ENCODE measurements at regions of chr7 and their contacts with region 1.

Region 1: GRCh38 chr7:148773334-148773733 is 74.6 kb downstream of the CUL1 start:
- DNase-seq: peak in 33 of 35 experiments; percentile 9 to 63 (median 28)
- ATAC-seq: peak; percentile 91 to 99 (median 98)
- H3K4me3 ChIP-seq: no peak overlapping the region
- H3K4me3 Mint-ChIP-seq: peak overlapping the region; percentile 8 to 50 (median 22)
- H3K27ac ChIP-seq: peak overlapping the region; percentile 67
- H3K27ac Mint-ChIP-seq: peak overlapping the region; percentile 91 to 92
- H3K4me1 ChIP-seq: peaks cover 19 to 22% of the 10 kb centered on the region in 2 experiments
- H3K4me1 Mint-ChIP-seq: peaks cover 37 to 39% (median 38%) of the 10 kb centered on the region in 3 donors
- H3K27me3 ChIP-seq: no peaks in the 10 kb centered on the region
- H3K27me3 Mint-ChIP-seq: no peaks in the 10 kb centered on the region

Region 2: GRCh38 chr7:148230296-148230695 is 543.0 kb before region 1 on chr7:
- CTCF ChIA-PET with region 1: no interaction called
- POLR2A ChIA-PET with region 1: no interaction called
- DNase-seq: no peak
- ATAC-seq: no peak
- H3K4me3 ChIP-seq: no peak overlapping the region
- H3K4me3 Mint-ChIP-seq: no peak overlapping the region
- H3K27ac ChIP-seq: no peak overlapping the region
- H3K27ac Mint-ChIP-seq: no peak overlapping the region
- H3K4me1 ChIP-seq: no peaks in the 10 kb centered on the region
- H3K4me1 Mint-ChIP-seq: no peaks in the 10 kb centered on the region
- H3K27me3 ChIP-seq: peaks cover 0 to under 1% of the 10 kb centered on the region in 2 experiments
- H3K27me3 Mint-ChIP-seq: peaks cover 7 to 9% of the 10 kb centered on the region in 2 donors

Region 3: DNA sequence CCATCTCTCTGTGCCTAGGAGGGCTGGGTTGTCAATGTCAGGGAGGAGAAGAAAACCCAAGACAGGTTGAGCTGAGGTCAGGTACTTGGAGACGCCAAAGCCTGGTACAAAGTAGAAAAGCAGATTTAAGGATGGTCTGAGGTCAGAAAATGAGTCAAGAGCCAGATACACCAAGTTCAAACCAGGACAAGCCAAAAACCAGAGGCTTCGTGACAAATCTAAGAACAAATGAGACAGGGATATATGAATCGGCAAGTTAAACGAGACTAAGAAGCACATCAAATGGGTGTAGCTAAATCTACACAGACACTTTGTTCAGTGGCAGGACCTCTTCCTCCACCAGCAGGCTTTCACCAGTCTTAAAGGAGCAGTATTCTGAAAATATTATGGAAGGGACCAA is 148.6 kb before region 1 on chr7:
- CTCF ChIA-PET with region 1: no interaction called
- POLR2A ChIA-PET with region 1: interaction called in 1 of 2 experiments, 12 read pairs
- DNase-seq: no peak
- ATAC-seq: no peak
- H3K4me3 ChIP-seq: peak overlapping the region in 1 of 2 donors; percentile 15
- H3K4me3 Mint-ChIP-seq: peak overlapping the region in 1 of 3 donors; percentile 0
- H3K27ac ChIP-seq: no peak overlapping the region
- H3K27ac Mint-ChIP-seq: peak overlapping the region in 1 of 2 donors; percentile 3
- H3K4me1 ChIP-seq: peaks cover 30 to 32% of the 10 kb centered on the region in 2 experiments
- H3K4me1 Mint-ChIP-seq: peaks cover 52 to 54% (median 52%) of the 10 kb centered on the region in 3 donors
- H3K27me3 ChIP-seq: peaks cover 0 to 14% of the 10 kb centered on the region in 2 experiments
- H3K27me3 Mint-ChIP-seq: peaks cover 6 to 14% of the 10 kb centered on the region in 2 donors

Measured in T-cell (primary cell).